HAP-1 (cell line): ENCODE measurements at regions of chr11 and their contacts with region 1.

Region 1: DNA sequence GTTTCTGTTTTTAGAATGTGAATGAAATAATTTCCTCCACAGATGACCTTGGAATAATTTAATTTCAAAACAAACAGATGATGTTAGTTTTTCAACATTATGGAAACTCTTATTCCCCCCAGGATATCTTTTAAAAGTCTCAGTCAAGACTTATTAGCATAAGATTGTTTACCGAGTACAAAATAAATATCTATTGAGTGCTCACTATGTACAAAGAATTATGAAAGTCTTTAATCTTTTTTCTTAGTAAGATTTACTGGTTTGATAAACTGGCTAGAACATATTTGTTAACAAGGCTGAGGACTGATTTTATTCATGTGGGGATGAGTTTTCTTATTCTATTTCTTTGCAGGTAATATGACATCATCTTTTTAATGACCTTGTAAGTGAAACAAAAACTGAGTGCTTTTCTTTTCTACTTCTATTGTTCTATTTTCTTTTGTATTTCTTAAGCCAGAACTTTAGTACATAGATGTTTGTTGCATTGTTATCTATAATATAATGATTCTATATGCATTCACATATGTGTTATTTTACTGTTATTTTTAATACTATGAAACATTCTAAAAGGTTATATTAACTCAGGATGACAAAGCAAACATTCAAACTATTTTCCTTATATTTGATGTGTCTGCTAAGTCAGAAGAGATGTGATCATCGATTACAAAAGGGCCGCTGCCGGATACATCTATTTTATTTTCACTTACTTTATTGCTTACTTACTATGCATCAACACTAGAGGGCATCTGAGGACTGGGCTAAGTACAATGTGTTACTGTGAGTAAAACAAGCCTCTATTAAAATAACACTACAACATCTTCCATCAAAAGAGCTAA is 111.0 kb upstream of the ARHGAP42 start:
- DNase-seq: peak; percentile 45 to 58
- H3K4me3 ChIP-seq: no peak overlapping the region
- H3K4me1 ChIP-seq: no peaks in the 10 kb centered on the region
- H3K27me3 ChIP-seq: no peaks in the 10 kb centered on the region; the same call in 1 of the 2 replicates

Region 2: GRCh38 chr11:99791356-99791755 is 784.7 kb before region 1 on chr11:
- in situ Hi-C with region 1: no loop called
- DNase-seq: no peak
- H3K4me3 ChIP-seq: no peak overlapping the region
- H3K4me1 ChIP-seq: no peaks in the 10 kb centered on the region
- H3K27me3 ChIP-seq: no peaks in the 10 kb centered on the region

Region 3: DNA sequence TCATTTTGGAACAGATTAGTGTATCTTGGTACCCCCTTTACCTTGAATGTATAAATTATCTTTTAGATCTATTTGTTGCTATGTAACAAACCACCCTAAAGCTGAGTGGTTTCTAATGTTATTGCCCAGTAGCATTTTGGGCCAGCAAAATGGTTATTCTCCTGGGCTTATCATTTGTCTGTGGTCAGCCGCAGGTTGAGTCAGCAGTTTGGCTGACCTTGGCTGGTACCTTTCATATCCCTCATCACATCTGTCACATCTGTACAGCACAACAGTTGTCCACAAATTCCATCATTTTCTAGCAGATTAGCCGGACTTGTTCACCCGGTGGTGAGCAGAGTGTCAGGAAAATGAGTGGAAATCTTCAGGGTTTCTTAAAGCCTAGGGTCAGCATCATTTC is 477.5 kb before region 1 on chr11:
- in situ Hi-C with region 1: no loop called
- DNase-seq: no peak
- H3K4me3 ChIP-seq: no peak overlapping the region
- H3K4me1 ChIP-seq: no peaks in the 10 kb centered on the region
- H3K27me3 ChIP-seq: no peaks in the 10 kb centered on the region

Region 4: GRCh38 chr11:100851170-100851569 is 275.1 kb after region 1 on chr11:
- in situ Hi-C with region 1: loop called (anchors 5 kb)
- DNase-seq: no peak
- H3K4me3 ChIP-seq: no peak overlapping the region
- H3K4me1 ChIP-seq: peaks cover 5% of the 10 kb centered on the region
- H3K27me3 ChIP-seq: 0 out of 2 replicates have a peak, but pooled peaks cover 2% of the 10 kb centered on the region

Region 5: DNA sequence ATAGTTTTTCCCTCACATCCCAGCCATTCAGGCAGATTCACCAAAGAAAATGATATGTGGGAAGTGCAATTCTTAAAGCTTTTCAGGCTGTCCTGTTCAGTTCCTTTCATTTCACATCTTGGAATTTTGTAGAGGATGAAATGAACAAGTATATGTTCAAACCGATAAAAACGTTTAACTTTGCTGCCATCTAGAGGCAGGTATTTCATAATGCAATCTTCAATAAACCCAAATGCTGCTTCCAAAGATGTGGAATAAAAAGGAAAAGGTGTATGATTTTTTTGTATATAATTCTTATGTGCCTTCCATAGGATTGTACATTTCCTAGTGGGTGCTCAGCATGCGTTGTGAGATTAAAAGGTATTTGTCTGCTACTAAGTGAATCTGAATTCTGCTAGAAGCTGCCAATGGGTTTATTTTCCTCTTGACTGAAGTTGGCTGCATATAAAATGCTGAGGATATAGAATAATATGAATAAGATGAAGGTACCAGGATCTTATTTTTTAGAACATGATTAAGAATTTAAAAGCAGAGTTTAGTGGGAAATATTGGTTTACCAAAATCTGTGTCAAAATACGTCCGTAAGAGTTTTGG is 354.2 kb after region 1 on chr11:
- in situ Hi-C with region 1: loop called (anchors 10 kb)
- DNase-seq: peak in 1 of 2 experiments; percentile 74
- H3K4me3 ChIP-seq: no peak overlapping the region
- H3K4me1 ChIP-seq: peaks cover 21% of the 10 kb centered on the region
- H3K27me3 ChIP-seq: 0 out of 2 replicates have a peak, but pooled peaks cover 2% of the 10 kb centered on the region